GM12878 (cell line): ENCODE measurements at regions of chr11 and their contacts with region 1.

Region 1: GRCh38 chr11:85109141-85109540 is 518.0 kb downstream of the DLG2 start:
- DNase-seq: peak; percentile 37
- ATAC-seq: peak; percentile 84
- H3K4me3 ChIP-seq: peak overlapping the region; percentile 43; the same call in 1 of the 2 replicates
- H3K27ac ChIP-seq: 0 out of 2 replicates have a peak overlapping the region, but pooled peaks have one; percentile 40
- H3K4me1 ChIP-seq: peaks cover 21% of the 10 kb centered on the region
- H3K27me3 ChIP-seq: no peaks in the 10 kb centered on the region
- CTCF ChIP-seq: no peak
- EP300 ChIP-seq: no peak
- POLR2A ChIP-seq: no peak
- RAD21 ChIP-seq: no peak

Region 2: DNA sequence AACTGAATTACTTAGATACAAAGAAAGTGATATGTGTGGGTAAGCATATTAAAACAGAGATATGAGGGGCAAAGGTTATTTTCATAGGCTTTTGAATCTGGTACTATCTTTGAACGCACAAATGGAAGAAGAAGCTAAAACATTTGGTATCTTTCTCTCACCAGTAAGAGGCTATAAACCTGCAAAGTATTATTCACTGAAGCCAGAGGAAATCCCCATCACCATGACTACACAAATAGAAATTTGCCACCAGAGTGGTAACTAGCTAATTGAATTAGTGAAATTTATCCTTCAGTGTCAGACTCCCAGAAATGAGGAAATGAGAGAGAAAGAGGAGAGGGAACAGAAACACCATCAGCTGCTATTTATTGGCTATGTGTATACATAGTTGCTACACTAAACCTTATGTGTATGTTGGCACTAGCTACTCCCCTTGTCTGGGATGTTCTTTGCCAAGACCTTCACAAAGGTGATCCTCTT is 14.7 kb after region 1 on chr11:
- CTCF ChIA-PET with region 1: no interaction called
- POLR2A ChIA-PET with region 1: no interaction called
- RAD21 ChIA-PET with region 1: interaction called, 15 read pairs
- SMC1A ChIA-PET with region 1: interaction called, 21 read pairs
- in situ Hi-C with region 1: no loop called
- intact Hi-C with region 1: no loop called
- DNase-seq: peak; percentile 89
- ATAC-seq: peak; percentile 98
- H3K4me3 ChIP-seq: peak overlapping the region; percentile 8; the same call in 1 of the 2 replicates
- H3K27ac ChIP-seq: peak overlapping the region; percentile 43; the same call in 1 of the 2 replicates
- H3K4me1 ChIP-seq: peaks cover 10% of the 10 kb centered on the region
- H3K27me3 ChIP-seq: no peaks in the 10 kb centered on the region
- CTCF ChIP-seq: no peak
- EP300 ChIP-seq: peak; percentile 78 to 80; a peak in 3 of 4 replicates
- POLR2A ChIP-seq: no peak
- RAD21 ChIP-seq: no peak